ENCODE measurements at regions of chr11 and their contacts with region 1.

Region 1: DNA sequence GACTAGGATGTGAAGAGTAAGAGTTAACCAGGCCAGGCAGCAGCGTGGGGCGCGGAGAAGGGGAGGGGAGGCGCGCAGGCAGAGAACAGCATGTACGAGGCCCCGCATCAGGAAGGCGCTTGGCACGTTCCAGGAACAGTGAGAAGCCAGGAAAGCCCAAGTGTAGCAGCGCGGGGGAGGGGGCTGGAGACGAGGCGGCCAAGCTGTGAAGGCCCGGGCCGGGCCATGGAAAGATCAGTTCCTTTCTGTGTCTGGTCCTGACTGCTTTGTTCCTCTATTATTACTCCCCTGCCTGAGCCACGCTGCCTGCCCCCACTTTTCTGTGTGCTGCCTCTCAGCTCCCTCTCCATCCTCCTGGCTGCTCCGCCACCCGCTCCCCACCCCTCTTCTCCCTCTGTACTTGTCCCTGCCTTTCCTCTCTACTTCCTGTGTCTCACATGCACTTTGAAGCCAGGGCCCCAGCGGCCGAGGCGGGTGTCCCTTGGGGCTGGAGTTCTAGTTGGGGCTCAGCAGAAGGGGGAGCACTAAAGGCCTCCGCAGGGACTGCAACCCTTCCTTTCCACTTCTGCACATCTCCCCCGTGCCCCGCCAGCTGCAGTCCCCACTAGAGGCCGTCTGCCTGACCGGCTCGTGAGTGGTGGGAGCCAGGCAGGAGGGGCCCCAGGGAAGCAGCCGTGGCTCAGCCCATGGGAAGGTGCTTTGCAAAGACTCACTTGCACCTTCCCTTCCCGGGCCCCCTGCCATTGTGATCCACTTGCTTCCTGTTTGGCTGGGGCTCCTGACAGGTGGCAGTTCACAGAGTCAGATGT is 63.7 kb downstream of the PRDM11 start:
- DNase-seq: peak in 1 of 2 donors; percentile 97
- H3K4me3 ChIP-seq: peak overlapping the region; percentile 16 to 29
- H3K27ac ChIP-seq: peak overlapping the region; percentile 83
- H3K4me1 ChIP-seq: peaks cover 27% of the 10 kb centered on the region
- H3K27me3 ChIP-seq: no peaks in the 10 kb centered on the region
- CTCF ChIP-seq: peak in 1 of 3 experiments; percentile 5
- POLR2A ChIP-seq: no peak

Region 2: GRCh38 chr11:45147017-45147728 is 62.9 kb before region 1 on chr11:
- intact Hi-C with region 1: loop called (anchors 5 kb)
- DNase-seq: peak; percentile 95 to 96
- H3K4me3 ChIP-seq: peak overlapping the region; percentile 64 to 68
- H3K27ac ChIP-seq: peak overlapping the region; percentile 79
- H3K4me1 ChIP-seq: peaks cover 45% of the 10 kb centered on the region
- H3K27me3 ChIP-seq: no peaks in the 10 kb centered on the region
- CTCF ChIP-seq: no peak
- POLR2A ChIP-seq: peak in 1 of 2 donors; percentile 62

Region 3: GRCh38 chr11:45158198-45158731 is 51.8 kb before region 1 on chr11:
- intact Hi-C with region 1: no loop called
- DNase-seq: no peak
- H3K4me3 ChIP-seq: peak overlapping the region in 1 of 2 donors; percentile 7
- H3K27ac ChIP-seq: peak overlapping the region; percentile 87
- H3K4me1 ChIP-seq: peaks cover 92% of the 10 kb centered on the region
- H3K27me3 ChIP-seq: no peaks in the 10 kb centered on the region
- CTCF ChIP-seq: no peak
- POLR2A ChIP-seq: no peak